Calu3 (cell line): ENCODE measurements at regions of chr6 and their contacts with region 1.

Region 1: DNA sequence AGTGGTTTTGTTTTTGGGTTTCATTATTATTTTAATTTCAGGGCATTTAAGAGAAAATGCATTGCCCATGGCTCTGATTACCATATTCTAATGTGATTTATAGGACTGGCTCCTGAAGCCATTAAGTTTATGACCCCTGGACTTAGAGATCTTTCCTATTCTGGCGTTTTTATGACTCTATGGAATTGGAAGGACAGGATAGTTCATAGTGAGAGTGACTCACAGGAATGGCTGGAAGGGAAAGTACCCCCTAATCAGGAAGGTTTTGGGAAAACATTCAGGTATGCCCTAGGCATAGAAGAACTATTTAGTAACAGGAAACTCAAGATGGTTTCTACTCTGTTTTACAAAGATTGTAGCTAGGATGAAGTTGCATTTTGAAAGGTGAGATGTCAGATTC is 108.6 kb upstream of the SLC2A12 start:
- DNase-seq: no peak
- H3K4me3 Mint-ChIP-seq: no peak overlapping the region
- H3K27ac Mint-ChIP-seq: no peak overlapping the region
- H3K4me1 Mint-ChIP-seq: peaks cover 10% of the 10 kb centered on the region
- H3K27me3 Mint-ChIP-seq: no peaks in the 10 kb centered on the region
- CTCF ChIP-seq: no peak

Region 2: DNA sequence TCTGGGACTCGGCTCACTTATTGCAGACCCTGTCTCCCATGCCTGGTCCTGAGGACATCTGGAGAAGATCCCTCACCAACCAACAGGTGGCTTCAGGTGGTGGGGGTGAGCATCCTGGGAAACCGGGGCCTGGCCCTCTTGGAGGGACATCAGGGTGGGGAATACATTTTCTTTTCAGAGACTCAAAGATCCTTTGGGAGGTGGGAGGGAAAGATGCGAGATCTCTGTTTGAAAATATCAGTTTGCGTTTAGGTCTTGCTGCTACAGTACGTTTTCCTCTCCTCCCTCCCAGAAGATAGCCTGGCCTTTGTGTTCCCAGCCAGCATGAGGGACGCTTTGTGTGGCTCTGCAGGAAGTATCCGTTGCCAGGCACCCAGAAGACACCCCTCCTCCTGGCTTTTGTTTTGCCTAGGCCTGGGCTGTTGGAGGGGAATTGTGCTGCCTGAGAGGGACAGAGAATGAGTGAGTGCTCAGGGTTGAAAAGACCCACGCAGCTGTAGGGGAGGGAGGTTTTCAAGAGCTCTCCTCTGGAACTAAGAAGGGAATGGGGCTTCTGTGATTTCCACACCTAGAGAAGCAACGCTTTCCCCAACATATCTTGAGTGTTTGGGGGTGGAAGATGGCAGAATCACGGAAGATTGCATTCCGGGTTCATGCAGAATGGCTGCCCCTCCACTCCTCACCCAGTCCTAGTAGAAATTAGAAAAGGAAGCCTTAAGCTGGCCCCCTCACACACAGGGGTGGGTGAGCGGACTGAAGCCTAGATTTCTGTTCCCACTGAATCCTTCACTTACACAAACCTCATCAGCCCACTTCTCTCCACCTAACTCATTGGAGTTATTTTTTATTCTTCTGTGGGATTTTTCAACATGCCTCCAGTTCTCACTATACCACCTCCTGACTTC is 86.6 kb before region 1 on chr6:
- CTCF ChIA-PET with region 1: no interaction called
- intact Hi-C with region 1: no loop called
- DNase-seq: no peak
- H3K4me3 Mint-ChIP-seq: no peak overlapping the region
- H3K27ac Mint-ChIP-seq: no peak overlapping the region
- H3K4me1 Mint-ChIP-seq: peaks cover 16% of the 10 kb centered on the region
- H3K27me3 Mint-ChIP-seq: no peaks in the 10 kb centered on the region
- CTCF ChIP-seq: no peak

Region 3: DNA sequence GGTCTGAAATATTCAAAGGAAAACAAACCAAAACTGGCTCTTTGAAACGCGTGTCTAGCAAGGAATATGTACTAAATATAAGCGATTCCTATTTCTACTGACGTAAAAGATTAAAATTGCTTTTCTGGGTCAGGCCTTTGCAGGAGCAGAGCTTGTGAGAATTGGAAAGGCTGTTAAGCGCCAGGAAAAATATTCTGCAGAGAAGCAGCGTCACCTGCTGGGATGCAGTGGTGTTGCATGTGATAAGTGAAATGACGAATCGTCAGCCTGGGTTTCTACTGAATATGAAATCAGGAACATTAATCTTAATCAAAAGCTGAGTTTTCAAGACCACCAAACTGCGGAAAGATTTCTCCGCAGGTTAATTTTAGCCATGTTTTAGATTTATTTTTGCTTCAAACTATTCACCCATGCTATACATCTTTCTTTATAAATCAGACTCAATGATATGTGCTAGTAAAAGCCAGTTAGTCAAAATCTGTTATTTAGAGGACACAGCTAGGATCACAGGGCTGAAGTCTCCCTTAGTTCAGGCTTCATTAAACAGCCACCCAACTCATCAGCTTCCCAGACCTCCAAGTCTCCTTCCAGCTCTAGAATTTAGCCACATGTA is 721.5 kb after region 1 on chr6:
- CTCF ChIA-PET with region 1: no interaction called
- intact Hi-C with region 1: loop called (anchors 5 kb)
- DNase-seq: peak; percentile 55
- H3K4me3 Mint-ChIP-seq: no peak overlapping the region
- H3K27ac Mint-ChIP-seq: no peak overlapping the region
- H3K4me1 Mint-ChIP-seq: no peaks in the 10 kb centered on the region
- H3K27me3 Mint-ChIP-seq: no peaks in the 10 kb centered on the region
- CTCF ChIP-seq: peak; percentile 64